ENCODE measurements at regions of chr17 and their contacts with region 1.

Region 1: DNA sequence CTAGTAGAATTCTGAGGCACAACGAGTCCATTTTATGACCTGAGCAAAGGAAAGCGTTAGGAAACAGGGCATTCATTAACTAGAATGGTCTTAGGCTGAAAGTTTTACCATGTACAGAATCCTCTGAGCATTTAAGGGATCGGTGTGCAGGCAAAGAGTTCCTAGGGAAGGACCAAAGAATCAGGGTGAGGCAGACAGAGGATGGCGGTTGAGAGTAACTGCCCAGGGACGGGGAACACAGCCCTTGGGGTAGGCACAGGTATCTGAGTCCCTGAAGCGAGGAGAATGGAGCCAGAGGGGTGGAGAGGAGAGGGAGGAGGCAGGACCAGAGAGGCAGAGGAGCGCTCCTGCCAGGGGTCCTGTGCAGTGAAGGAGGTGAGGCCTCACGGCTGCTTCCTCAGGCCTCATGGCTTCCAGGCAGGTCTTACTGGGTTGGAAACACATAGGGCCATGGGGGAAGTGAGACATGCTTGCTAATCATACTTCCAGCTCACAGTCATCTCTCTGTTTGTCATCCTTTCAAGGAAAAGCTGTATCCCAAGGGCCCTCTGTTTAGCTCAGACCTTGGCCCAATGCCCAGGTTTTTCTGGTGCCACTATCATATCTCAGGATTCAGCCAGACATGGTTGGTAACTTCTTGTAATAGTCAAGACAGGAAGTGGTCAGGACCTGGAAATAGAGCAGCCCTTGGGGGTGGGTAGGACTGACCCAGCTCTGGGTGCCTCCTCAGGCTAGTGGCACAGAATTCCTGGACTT is 13.8 kb upstream of the ITGB3 start:
- DNase-seq: peak in 2 of 3 donors; percentile 66 to 78
- ATAC-seq: peak; percentile 75 to 87 (median 84)
- H3K4me3 ChIP-seq: no peak overlapping the region
- H3K27ac ChIP-seq: peak overlapping the region in 2 of 3 donors; percentile 18 to 51
- H3K4me1 ChIP-seq: no peaks in the 10 kb centered on the region
- H3K27me3 ChIP-seq: no peaks in the 10 kb centered on the region
- CTCF ChIP-seq: no peak
- POLR2A ChIP-seq: no peak

Region 2: DNA sequence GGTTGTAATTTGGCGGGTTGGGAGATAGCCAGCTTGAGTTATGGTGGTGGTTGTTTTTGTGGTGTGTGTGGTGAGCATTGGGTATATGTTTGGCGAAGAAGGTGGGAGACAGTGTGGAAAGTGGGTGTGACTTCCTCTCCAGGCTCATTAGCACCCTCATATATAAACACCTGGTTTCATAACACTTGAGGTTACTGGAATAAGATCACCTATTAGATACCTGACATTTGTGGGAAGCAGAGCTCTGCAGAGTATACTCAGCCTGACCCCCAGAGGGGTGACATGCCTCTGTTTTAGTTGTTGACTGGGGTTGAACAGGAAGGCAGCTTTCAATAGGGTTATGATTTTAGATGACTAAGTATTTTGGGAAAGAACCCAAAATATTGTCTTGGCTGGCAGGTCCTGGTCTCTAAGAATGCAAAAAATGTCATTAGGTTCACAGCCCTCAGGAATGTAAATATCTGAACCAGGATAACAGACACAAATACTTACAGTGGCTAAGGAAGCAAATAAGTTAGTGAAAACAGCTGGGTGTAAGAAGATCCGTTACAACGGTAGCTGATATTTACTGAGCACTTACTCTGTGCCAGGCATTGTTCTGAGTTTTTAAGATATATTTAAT is 65.6 kb after region 1 on chr17:
- intact Hi-C with region 1: loop called (anchors 10 kb)
- DNase-seq: no peak
- ATAC-seq: peak in 3 of 4 donors; percentile 25 to 66 (median 43)
- H3K4me3 ChIP-seq: no peak overlapping the region
- H3K27ac ChIP-seq: no peak overlapping the region
- H3K4me1 ChIP-seq: no peaks in the 10 kb centered on the region
- H3K27me3 ChIP-seq: no peaks in the 10 kb centered on the region
- CTCF ChIP-seq: no peak
- POLR2A ChIP-seq: no peak